AG04449 (cell line): ENCODE measurements at regions of chr11 and their contacts with region 1.

Region 1: GRCh38 chr11:43944761-43945311 is 2.4 kb downstream of the C11orf96 start:
- DNase-seq: no peak
- H3K4me3 ChIP-seq: peak overlapping the region; percentile 62
- CTCF ChIP-seq: peak; percentile 84

Region 2: DNA sequence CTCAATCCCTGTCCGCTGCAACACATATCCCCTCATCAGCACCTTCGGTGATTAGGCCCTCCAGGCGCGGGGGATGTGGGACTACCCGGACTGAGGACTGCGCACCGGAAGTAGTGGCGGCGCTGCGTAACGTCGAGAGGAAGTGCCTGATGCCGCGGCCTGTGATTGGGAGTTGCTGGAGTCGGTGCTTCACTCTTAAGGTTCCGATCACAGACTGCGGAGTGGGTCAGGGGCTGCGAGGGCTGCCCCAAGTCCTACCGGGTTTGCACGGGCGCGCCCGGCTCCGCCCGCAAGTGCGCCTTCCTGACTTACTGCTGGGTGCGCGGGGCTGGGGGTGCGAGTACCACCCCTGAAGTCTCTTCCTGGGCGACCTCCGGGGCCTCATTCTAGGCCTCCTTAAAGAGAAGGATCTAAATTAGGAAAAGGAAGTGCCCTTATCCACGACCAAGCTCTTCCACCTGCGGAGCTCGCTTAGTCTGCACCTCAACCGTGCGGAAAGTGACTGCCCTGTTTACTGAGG is 64.1 kb before region 1 on chr11 and contains the start of gene ALKBH3:
- CTCF ChIA-PET with region 1: interaction called, 10 read pairs
- POLR2A ChIA-PET with region 1: interaction called, 3 read pairs
- DNase-seq: peak; percentile 61
- H3K4me3 ChIP-seq: peak within 1 kb of the TSS; percentile 88
- CTCF ChIP-seq: no peak

Region 3: DNA sequence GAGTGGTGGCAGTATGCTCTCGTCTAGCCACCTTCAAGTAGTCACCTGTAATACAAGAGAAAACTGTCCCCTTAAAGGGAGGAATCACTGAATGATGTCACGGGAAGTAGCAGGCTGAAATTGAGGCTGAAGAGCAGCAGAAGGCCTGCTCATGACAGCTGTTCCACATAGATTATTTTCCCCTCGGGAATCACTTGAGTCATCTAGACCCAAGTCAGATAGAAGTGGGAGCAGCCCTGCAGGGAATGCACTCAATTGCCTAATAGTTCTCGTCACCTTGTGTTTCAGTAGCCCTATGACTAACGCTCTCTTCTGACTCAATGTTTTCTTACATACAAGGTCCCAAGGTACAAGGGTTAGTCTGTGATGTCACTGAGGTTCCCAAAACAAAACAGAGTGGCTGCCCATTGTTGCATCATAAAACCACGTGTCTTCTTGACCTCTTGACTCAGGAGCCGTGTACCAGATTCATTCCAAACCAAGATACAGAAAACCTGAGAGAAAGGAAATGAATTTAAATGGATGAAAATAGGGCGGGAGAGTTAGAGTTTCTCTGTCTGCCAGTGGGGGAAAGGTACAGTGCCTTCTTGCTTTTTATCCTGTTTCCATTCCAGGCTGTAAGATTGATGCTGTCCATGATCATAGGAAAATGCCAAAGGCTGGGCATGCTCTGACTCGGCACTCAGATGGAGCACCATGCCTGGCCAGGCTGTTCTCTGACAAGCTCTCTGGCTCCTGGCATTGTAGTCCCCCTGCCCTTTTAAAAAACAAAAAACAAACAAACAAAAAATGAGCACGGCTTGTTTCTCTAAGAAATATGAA is 24.0 kb before region 1 on chr11:
- CTCF ChIA-PET with region 1: interaction called, 22 read pairs
- POLR2A ChIA-PET with region 1: interaction called, 22 read pairs
- DNase-seq: peak; percentile 100
- H3K4me3 ChIP-seq: no peak overlapping the region
- CTCF ChIP-seq: no peak

Region 4: GRCh38 chr11:43955381-43956118 is 10.7 kb after region 1 on chr11:
- CTCF ChIA-PET with region 1: interaction called, 88 read pairs
- POLR2A ChIA-PET with region 1: interaction called, 16 read pairs
- DNase-seq: no peak
- H3K4me3 ChIP-seq: no peak overlapping the region
- CTCF ChIP-seq: no peak

Region 5: GRCh38 chr11:43975629-43976028 is 30.8 kb after region 1 on chr11:
- CTCF ChIA-PET with region 1: interaction called, 10 read pairs
- POLR2A ChIA-PET with region 1: no interaction called
- DNase-seq: no peak
- H3K4me3 ChIP-seq: no peak overlapping the region
- CTCF ChIP-seq: no peak

Region 6: DNA sequence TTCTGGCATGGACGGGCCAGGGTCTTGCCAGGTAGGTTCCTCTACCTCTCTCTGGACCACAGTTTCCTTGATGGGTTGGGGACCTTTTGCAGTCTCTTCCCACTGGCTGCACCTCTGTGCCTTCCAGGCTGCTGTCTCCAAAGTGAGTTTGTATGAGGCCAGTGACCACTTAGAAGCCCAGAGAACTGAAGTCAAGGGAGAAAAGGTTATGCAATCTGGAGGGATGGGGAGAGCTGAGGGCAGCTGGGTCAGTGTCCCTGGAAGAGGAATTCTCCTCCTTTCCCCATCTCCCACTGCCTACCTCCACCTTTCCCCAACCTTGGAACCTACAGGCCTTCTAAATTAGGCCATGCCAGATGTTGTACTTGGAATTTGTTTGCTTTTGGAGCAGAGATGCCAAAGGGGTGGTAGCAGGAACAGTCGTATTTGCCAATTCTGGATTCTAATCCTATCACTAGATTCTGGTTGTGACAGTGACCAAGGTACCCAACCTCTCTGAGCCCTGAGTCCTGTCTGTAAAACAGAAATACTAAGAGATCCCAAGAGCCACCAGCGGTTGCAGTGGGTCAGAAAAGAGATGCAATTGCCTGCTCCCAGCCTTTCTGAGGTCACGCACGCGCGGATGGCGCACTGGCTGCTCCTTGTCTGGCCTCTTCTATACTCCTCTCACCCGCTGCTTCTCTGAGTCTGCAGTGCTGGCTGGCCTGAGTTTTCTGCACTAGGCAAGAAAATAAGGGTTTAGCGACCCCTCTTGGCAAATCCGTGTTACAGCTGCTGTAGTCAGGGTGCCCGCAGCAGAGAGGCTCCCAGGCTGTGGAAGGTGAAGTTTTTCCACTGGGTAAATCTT is 92.2 kb after region 1 on chr11:
- CTCF ChIA-PET with region 1: interaction called, 81 read pairs
- POLR2A ChIA-PET with region 1: interaction called, 15 read pairs
- DNase-seq: peak; percentile 41
- H3K4me3 ChIP-seq: no peak overlapping the region
- CTCF ChIP-seq: peak; percentile 83